ENCODE measurements at regions of chr6 and their contacts with region 1.

Region 1: DNA sequence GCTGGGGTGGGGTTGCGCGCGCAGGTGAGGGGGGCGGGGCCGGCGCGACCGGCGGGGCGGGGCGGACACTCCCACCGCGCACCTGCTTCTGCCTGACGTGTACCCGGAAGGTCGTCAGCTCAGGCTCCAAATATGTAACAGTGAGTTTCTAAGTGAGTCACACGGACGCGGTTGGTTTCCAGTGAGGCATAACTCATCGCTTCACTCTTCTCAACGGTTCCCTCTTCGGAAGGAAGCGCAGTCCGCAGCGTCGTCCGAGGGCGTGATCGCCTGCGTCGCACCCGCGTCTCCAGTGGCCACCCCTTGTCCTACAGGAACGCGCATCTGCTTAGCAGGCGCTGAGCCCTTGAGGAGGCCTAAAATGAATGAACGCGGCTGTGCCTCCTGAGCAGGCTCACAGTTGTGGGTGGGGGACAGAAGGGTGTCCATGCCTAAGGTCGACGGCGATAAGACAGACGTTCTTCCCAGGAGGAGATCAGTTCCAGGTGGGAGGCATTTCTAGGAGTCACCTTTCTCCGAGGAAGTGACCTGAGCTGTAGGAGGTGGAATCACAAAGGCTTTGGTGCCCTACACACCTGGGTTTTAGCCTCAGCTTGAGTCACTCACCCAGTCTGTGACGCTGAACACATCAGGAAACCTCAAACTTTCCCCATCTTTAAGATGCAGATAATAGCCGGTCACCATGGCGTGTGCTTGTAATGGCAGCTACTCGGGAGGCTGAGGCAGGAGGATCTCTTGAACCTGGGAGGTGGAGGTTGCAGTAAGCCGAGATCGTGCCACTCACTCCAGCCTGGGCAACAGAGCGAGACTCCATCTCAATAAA is 50.9 kb upstream of the EZR start:
- DNase-seq: peak in 1 of 4 experiments; percentile 95
- ATAC-seq: peak; percentile 94
- H3K4me3 ChIP-seq: peak overlapping the region; percentile 41
- H3K27ac ChIP-seq: peak overlapping the region; percentile 94
- H3K4me1 ChIP-seq: peaks cover 17 to 24% of the 10 kb centered on the region in 2 experiments; a peak in 4 of 5 replicates
- H3K27me3 ChIP-seq: no peaks in the 10 kb centered on the region
- CTCF ChIP-seq: peak; percentile 64 to 79 (median 68)
- EP300 ChIP-seq: peak; percentile 79
- POLR2A ChIP-seq: peak; percentile 88
- RAD21 ChIP-seq: peak; percentile 66 to 79

Region 2: GRCh38 chr6:158704181-158704822 is 165.7 kb before region 1 on chr6:
- CTCF ChIA-PET with region 1: no interaction called
- POLR2A ChIA-PET with region 1: no interaction called
- in situ Hi-C with region 1: no loop called
- intact Hi-C with region 1: loop called (anchors 5 kb)
- DNase-seq: peak; percentile 92 to 95 (median 94)
- ATAC-seq: peak; percentile 98
- H3K4me3 ChIP-seq: peak overlapping the region; percentile 36
- H3K27ac ChIP-seq: peak overlapping the region; percentile 45; the same call in 2 of the 3 replicates
- H3K4me1 ChIP-seq: peaks cover 26 to 35% of the 10 kb centered on the region in 2 experiments
- H3K27me3 ChIP-seq: peaks cover 0 to 15% of the 10 kb centered on the region in 2 experiments; a peak in 3 of 5 replicates
- CTCF ChIP-seq: peak; percentile 97 to 98 (median 97)
- EP300 ChIP-seq: no peak; the same call in 1 of the 2 replicates
- POLR2A ChIP-seq: no peak
- RAD21 ChIP-seq: peak; percentile 99

Region 3: DNA sequence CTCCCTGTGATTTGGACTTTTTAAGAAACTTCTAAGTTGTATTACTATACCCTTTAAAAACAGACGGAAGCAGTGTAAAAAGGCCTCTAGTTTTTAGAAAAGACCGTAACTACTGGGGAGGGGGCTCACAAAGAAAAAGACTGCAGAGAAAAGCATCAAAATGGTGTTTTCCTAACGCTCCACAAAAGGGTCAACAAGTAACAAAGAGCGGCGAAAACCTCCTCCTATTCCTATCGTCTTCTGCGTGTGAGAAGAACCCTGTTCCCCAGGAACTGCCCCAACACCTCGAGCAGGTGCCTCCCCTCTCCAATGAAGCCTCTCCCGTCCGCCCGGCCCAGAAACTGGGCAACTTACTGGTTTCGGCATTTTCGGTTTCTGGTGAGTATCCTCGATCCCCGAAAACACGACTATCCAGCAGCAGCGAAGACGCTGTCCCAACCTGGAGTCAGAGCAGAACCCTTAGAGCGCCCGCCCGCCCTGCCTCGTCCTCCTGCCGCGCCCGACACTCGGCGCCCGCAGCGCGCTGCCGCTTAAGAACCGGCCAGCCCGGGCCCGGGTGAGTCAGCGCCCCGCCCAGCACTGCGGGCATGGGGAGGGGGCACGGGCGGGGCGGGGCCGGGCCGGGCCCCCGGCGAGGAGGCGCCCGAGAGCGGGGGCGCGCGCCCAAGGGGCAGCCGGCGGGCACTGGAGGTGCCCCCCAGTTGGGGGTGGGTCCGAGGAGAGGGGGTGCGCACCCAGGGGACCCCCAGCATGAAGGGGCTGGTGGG is 52.1 kb before region 1 on chr6:
- CTCF ChIA-PET with region 1: no interaction called
- POLR2A ChIA-PET with region 1: interaction called, 8 read pairs
- in situ Hi-C with region 1: no loop called
- intact Hi-C with region 1: loop called (anchors 1 kb)
- DNase-seq: peak; percentile 85 to 91 (median 87)
- ATAC-seq: peak; percentile 76
- H3K4me3 ChIP-seq: peak overlapping the region; percentile 76
- H3K27ac ChIP-seq: peak overlapping the region; percentile 87
- H3K4me1 ChIP-seq: peaks cover 42 to 48% of the 10 kb centered on the region in 2 experiments
- H3K27me3 ChIP-seq: no peaks in the 10 kb centered on the region
- CTCF ChIP-seq: no peak
- EP300 ChIP-seq: no peak
- POLR2A ChIP-seq: peak; percentile 56
- RAD21 ChIP-seq: 0 out of 4 replicates have a peak, but pooled peaks of 1 of the 2 experiments have one; percentile 8

Region 4: DNA sequence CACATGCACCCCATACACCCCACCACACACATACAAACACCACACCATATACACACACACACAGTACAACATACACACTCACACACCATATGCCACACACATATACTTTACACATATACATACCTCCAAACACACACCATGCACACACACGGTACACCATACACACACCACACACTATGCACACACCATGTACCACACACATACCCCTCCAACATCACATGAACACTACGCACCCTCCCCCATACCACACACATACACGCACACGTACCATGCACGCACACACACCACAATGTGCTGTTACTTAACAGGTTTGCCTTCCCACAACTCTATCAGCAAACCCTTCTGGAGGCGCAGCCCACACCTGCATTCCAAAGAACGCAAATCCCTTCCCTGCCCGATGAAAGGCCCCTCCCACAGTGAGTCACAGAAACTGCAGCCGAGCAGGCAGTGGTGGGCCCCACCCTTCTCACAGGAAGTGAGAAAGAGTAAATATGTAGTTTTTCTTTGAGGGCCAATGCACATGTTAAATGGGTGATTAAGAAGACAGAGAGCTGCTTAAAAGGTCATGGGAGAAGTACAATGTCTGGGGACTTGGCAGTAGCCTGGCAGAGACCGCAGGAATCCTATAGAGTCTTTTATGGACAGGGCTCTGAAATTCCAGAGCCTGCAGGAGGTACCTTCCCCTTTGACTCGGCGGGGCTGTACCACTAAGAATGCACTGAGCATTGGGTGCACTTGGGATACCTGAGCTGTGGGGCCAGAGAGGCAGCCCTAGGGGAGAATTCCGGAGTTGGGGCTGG is 16.8 kb before region 1 on chr6:
- CTCF ChIA-PET with region 1: no interaction called
- POLR2A ChIA-PET with region 1: interaction called, 22 read pairs
- in situ Hi-C with region 1: no loop called
- intact Hi-C with region 1: loop called (anchors 1 kb)
- DNase-seq: peak; percentile 95 to 99 (median 96)
- ATAC-seq: peak; percentile 91
- H3K4me3 ChIP-seq: peak overlapping the region; percentile 24
- H3K27ac ChIP-seq: peak overlapping the region; percentile 89
- H3K4me1 ChIP-seq: peaks cover 29 to 55% of the 10 kb centered on the region in 2 experiments
- H3K27me3 ChIP-seq: no peaks in the 10 kb centered on the region; a peak in 1 of 5 replicates
- CTCF ChIP-seq: no peak
- EP300 ChIP-seq: peak; percentile 98
- POLR2A ChIP-seq: peak; percentile 79
- RAD21 ChIP-seq: peak in 1 of 2 experiments; percentile 36; a peak in 1 of 4 replicates

Region 5: DNA sequence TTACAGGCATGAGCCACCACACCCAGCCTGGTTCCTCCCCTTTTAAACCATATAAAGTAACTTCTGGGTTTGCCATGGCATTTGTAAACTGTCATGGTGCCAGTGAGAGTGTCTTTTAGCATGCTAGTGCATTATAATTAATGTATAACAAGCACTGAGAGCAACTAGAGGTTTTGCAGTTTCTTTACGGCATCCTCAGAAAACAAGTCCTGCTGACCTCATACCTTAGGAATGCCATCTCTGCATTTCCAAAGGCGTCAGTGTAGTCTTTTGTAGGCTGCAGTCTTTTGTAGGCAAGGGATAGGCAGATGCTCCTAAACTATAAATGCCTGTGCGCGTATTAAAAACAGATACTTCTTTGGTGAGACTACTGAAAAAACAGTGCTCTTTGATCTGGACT is 24.2 kb after region 1 on chr6:
- CTCF ChIA-PET with region 1: no interaction called
- POLR2A ChIA-PET with region 1: interaction called, 12 read pairs
- in situ Hi-C with region 1: no loop called
- intact Hi-C with region 1: no loop called
- DNase-seq: no peak
- ATAC-seq: no peak; the same call in 2 of the 3 replicates
- H3K4me3 ChIP-seq: no peak overlapping the region
- H3K27ac ChIP-seq: no peak overlapping the region
- H3K4me1 ChIP-seq: no peaks in the 10 kb centered on the region
- H3K27me3 ChIP-seq: no peaks in the 10 kb centered on the region
- CTCF ChIP-seq: no peak
- EP300 ChIP-seq: no peak
- POLR2A ChIP-seq: no peak
- RAD21 ChIP-seq: no peak

Region 6: DNA sequence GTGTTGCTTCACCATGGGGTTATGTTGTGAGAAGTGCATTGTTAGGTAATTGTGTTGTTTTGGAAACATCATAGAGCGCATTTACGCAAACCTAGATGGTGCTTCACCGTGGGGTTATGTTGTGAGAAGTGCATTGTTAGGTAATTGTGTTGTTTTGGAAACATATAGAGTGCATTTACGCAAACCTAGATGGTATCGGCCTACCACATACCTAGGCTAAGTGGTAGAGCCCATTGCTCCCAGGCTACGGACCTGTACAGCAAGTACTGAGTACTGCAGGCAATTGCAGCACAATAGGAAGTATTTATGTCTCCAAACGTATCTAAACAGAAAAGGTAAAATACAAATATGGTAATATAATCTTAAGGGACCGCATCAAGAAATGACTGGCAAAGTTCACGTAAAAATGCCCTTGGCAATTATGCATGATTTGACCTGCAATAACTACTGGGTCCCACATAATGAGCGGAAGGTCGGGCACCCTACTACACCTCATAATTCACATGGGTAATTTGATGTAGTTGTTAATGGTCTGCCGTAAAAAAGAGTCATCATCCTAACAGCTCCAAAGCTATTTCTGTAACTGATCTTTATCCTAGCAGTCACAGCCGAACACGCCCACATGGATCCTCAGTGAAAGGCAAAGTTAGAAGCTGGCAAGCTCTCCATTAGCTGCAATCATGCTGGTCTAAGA is 53.9 kb after region 1 on chr6:
- CTCF ChIA-PET with region 1: no interaction called
- POLR2A ChIA-PET with region 1: interaction called, 4 read pairs
- in situ Hi-C with region 1: no loop called
- intact Hi-C with region 1: loop called (anchors 5 kb)
- DNase-seq: peak in 1 of 4 experiments; percentile 39
- ATAC-seq: peak; percentile 45
- H3K4me3 ChIP-seq: no peak overlapping the region
- H3K27ac ChIP-seq: no peak overlapping the region
- H3K4me1 ChIP-seq: peaks cover 4 to 12% of the 10 kb centered on the region in 2 experiments; a peak in 4 of 5 replicates
- H3K27me3 ChIP-seq: no peaks in the 10 kb centered on the region
- CTCF ChIP-seq: no peak
- EP300 ChIP-seq: no peak
- POLR2A ChIP-seq: no peak
- RAD21 ChIP-seq: no peak

Region 7: DNA sequence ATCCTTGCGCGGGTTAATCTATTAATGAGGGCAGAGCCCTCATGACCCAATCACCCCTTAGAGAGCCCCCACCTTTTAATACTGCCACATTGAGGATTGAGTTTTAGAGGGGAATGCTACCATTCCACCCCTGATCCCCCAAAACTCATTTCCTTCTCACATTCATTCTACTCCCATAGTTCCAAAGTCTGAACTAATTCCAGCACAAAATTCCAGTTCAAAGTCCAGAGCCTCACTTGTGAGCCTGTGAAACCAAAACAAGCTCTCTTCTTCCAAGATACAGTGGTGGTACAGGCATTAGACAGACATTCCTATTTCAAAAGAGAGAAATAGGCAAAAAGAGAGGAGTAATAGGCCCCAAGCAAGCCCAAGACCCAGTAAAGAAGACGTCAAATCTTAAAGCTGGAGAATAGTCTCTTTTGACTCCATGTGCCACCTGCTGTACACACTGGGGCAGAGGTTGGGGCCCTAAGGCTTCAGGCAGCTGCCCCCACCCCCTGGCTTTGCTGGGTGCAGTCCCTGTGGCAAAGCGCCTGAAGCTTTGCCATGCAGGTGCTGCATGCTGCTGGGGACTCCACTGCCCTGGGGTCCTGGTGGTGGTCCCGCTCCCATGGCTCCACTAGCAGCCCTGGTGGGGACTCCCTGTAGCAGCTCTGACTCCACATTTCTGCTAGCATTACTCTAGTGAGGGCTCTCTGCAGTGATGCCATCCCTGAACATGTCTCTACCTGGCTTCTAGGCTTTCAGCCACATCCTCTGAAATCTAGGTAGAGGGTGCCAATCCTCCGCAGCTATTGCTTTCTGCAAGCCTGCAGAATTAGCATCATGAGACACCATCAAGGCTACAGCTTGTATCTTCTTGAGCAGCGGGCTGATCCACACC is 88.7 kb after region 1 on chr6:
- CTCF ChIA-PET with region 1: no interaction called
- POLR2A ChIA-PET with region 1: no interaction called
- in situ Hi-C with region 1: no loop called
- intact Hi-C with region 1: loop called (anchors 5 kb)
- DNase-seq: no peak
- ATAC-seq: peak; percentile 66
- H3K4me3 ChIP-seq: no peak overlapping the region
- H3K27ac ChIP-seq: no peak overlapping the region
- H3K4me1 ChIP-seq: peaks cover 6 to 9% of the 10 kb centered on the region in 2 experiments; a peak in 4 of 5 replicates
- H3K27me3 ChIP-seq: no peaks in the 10 kb centered on the region
- CTCF ChIP-seq: peak; percentile 38 to 51 (median 42); a peak in 5 of 6 replicates
- EP300 ChIP-seq: no peak
- POLR2A ChIP-seq: no peak
- RAD21 ChIP-seq: peak; percentile 40 to 61; a peak in 3 of 4 replicates

Region 8: DNA sequence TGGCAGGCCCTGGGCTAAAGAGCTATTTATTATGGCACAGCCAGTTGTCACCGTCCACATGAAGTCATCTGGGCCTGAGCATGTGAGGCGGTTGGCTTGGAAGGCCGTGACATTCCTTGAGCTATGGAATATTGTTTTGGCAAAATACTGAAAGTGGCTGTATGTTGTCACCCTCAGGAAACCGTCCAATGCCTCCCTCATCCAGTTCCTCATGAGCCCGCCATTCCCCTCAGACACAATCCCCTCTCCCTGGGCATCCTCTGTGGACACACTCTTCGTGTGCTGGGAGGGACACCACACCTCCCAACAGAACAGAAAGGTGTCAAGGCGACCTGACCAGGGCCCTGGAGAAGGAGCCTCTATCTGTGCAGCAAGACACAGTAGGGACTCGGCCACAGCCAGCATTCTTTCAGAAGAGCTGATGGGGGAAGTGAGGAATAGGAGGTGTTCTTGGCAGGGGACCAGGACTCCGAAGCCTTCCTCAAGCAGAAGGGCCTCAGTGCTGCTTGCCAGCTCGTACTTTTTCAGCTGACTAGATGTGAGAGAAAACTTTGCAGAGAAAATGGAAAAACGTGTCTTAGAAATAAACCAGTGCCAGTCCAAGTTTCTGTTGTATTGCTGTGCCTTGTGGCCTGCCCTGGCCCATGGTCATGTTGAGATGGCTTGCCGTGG is 702.5 kb after region 1 on chr6:
- CTCF ChIA-PET with region 1: no interaction called
- POLR2A ChIA-PET with region 1: no interaction called
- in situ Hi-C with region 1: no loop called
- intact Hi-C with region 1: no loop called
- DNase-seq: no peak
- ATAC-seq: no peak
- H3K4me3 ChIP-seq: no peak overlapping the region
- H3K27ac ChIP-seq: no peak overlapping the region
- H3K4me1 ChIP-seq: no peaks in the 10 kb centered on the region
- H3K27me3 ChIP-seq: peaks cover 10 to 24% of the 10 kb centered on the region in 2 experiments; a peak in 4 of 5 replicates
- CTCF ChIP-seq: no peak
- EP300 ChIP-seq: no peak
- POLR2A ChIP-seq: no peak
- RAD21 ChIP-seq: no peak